ENCODE measurements at regions of chr11 and their contacts with region 1.

Region 1: GRCh38 chr11:695538-696248 is at the start of gene TMEM80:
- H3K4me3 ChIP-seq: peak within 1 kb of the TSS; percentile 89
- H3K27ac ChIP-seq: peak within 1 kb of the TSS; percentile 97
- H3K4me1 ChIP-seq: no peaks in the 10 kb centered on the region
- CTCF ChIP-seq: no peak

Region 2: DNA sequence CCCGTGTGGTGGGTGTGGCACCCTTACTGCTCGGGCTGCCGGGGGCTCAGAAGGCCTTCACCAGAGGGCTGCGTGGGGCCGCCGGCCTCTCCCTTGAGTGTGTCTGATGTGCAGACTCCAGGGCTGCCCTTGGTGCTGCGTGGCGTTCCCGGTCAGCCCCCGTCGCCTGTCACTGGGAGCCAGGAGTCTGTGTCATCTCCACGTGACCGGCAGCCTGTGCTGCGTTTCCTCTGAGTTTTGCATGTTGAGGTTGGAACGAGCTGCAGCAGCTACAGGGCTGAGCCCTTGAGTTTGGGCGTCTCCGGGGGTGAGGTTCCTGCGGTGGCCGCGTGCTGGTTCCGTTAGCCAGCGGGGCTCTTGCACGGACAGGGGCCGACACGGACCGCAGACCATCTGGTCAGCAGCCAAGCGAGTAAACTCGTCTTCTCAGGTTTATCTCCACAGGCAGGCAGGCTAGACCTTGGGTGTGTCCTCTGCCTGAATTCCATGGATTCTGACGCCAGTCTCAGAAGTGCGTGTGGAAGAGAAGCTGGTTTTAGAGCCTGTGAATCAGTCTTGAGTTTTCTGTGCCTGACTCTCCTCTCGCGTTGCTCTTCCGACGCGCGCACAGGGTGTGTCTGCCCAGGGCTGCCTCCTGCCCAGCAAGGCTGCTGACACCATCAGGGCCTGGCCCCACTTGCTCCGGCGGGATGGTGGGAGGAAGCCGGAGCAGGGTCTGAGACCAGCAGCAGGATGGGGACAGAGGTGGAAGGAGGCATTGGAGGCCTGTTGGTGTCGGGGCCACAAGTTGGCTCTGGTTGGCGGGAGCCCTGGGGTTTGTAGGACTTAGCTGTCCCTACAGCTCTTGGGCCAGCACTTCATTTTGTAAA is 235.1 kb before region 1 on chr11:
- CTCF ChIA-PET with region 1: no interaction called
- POLR2A ChIA-PET with region 1: no interaction called
- H3K4me3 ChIP-seq: no peak overlapping the region
- H3K27ac ChIP-seq: no peak overlapping the region
- H3K4me1 ChIP-seq: no peaks in the 10 kb centered on the region
- CTCF ChIP-seq: no peak

Region 3: DNA sequence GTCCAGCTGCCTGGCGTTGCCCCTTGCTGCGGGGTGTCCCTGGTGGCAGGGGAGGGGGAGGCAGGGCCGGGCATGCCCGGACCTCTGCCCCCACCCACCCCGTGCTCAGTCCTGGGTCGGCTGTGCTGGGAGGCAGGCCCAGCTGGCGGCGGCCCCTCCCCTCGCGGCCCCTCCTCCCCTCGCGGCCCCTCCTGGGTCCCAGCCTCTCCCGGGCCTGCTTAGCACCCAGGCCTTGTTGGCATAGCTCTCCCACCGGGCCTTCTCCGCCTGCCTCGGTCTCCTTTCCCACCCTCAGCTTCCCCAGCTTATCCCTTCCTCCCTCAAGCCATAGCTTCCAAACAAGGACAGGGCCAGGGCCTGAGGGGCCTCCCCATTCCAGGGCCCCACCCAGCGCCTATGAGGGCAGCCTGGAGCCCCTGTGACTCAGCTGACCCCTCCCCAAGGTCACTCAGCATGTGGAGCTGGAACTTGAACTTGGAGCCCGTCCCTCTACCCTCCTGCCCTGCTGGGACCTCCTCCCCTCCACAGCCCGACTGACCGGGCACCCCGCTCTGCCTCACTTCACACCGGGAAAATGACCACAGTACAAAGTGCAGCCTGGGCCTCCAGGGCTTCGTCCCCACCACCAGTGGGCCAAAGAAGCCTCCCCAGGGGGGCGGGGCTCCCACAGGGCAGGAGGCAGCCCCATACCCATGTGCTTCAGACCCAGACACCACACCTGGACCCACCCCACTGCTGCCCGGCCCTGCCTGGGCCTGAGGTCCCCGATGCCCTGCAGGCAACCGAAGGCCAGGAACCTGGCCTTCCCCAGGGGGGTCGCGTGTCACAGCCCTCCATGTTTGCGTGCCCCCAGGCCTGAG is 11.5 kb after region 1 on chr11:
- CTCF ChIA-PET with region 1: interaction called, 4 read pairs
- POLR2A ChIA-PET with region 1: interaction called, 19 read pairs
- H3K4me3 ChIP-seq: peak overlapping the region; percentile 79
- H3K27ac ChIP-seq: peak overlapping the region; percentile 40; the same call in 1 of the 2 replicates
- H3K4me1 ChIP-seq: no peaks in the 10 kb centered on the region
- CTCF ChIP-seq: no peak

Region 4: DNA sequence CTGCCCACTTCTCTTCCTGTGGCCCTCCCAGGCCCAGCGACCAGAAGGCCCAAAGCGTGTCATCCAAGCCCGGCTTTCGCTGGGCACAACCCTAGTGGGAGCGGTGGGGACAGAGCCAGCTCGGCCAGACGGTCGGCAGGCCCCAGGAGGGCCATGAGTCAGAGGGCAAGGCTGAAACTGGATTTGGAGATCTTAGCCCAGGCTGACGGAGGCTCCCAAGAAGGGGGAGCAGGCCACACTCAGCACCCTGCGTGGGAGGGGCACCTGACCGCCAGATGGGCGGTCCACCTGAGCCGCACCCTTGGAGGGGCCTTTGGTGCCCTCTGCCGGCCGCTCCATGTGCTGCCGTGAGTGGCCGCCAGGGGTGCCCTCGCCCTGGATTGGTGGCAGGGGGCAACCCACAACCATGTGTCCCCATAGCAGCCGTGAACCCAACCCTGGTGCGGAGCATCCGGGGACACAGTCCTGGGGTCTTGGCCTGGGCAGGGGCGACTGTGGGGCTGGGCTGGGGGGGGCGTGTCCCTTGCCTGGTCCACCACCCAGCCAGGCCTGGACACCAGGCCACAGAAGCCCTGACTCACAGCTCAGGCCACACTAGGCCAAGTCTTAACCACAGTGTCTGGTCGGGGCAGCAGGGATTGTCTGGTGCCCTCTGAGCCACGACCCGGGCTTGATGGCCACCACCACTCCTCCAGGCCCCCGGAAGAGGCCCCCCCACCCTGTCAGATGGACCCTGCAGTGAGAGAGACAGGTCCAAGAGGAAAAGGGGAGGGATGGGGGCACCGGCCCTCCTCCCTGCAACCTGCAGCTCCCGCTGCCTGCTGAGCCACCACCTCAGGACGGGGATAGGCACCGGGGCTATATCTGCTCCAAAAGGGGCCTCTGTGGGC is 32.4 kb after region 1 on chr11:
- CTCF ChIA-PET with region 1: interaction called, 28 read pairs
- POLR2A ChIA-PET with region 1: interaction called, 16 read pairs
- H3K4me3 ChIP-seq: no peak overlapping the region
- H3K27ac ChIP-seq: no peak overlapping the region
- H3K4me1 ChIP-seq: no peaks in the 10 kb centered on the region; the same call in 1 of the 2 replicates
- CTCF ChIP-seq: peak; percentile 97

Region 5: GRCh38 chr11:859509-860131 is 163.9 kb after region 1 on chr11:
- CTCF ChIA-PET with region 1: no interaction called
- POLR2A ChIA-PET with region 1: no interaction called
- H3K4me3 ChIP-seq: no peak overlapping the region
- H3K27ac ChIP-seq: no peak overlapping the region; the same call in 1 of the 2 replicates
- H3K4me1 ChIP-seq: no peaks in the 10 kb centered on the region
- CTCF ChIP-seq: 0 out of 2 replicates have a peak, but pooled peaks have one; percentile 8

Measured in HEK293 (cell line).